GM12878 (cell line): ENCODE measurements at regions of chr1 and their contacts with region 1.

Region 1: GRCh38 chr1:157105988-157106812 is 6.6 kb upstream of the ETV3L start:
- DNase-seq: peak; percentile 41
- ATAC-seq: peak; percentile 97
- H3K4me3 ChIP-seq: no peak overlapping the region
- H3K27ac ChIP-seq: peak overlapping the region; percentile 55
- H3K4me1 ChIP-seq: peaks cover 18% of the 10 kb centered on the region
- H3K27me3 ChIP-seq: no peaks in the 10 kb centered on the region; a peak in 1 of 4 replicates
- CTCF ChIP-seq: no peak
- EP300 ChIP-seq: peak; percentile 22 to 91; a peak in 2 of 4 replicates
- POLR2A ChIP-seq: 0 out of 2 replicates have a peak, but pooled peaks have one; percentile 21
- RAD21 ChIP-seq: no peak

Region 2: DNA sequence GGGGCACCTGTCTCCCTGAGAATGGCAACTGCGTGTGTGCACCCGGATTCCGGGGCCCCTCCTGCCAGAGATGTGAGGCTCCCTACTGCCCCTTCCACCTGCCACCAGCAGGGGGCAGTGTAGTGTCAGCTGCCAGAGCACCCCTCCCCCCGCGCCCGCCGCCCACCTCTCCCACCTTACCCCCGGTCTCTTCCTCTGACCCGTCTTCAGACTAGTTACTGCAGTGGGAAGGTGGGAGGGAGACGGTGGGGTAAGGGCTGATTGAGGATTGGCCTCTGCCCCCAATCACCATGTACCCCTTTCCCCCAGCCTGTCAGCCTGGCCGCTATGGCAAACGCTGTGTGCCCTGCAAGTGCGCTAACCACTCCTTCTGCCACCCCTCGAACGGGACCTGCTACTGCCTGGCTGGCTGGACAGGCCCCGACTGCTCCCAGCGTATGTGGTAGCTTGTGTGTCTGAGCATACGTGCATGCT is 195.9 kb before region 1 on chr1:
- CTCF ChIA-PET with region 1: no interaction called
- POLR2A ChIA-PET with region 1: no interaction called
- RAD21 ChIA-PET with region 1: no interaction called
- SMC1A ChIA-PET with region 1: no interaction called
- in situ Hi-C with region 1: no loop called
- intact Hi-C with region 1: no loop called
- DNase-seq: no peak
- ATAC-seq: peak; percentile 77
- H3K4me3 ChIP-seq: no peak overlapping the region
- H3K27ac ChIP-seq: no peak overlapping the region
- H3K4me1 ChIP-seq: no peaks in the 10 kb centered on the region
- H3K27me3 ChIP-seq: peaks cover 2% of the 10 kb centered on the region in 2 experiments; a peak in 3 of 4 replicates
- CTCF ChIP-seq: peak; percentile 69 to 97 (median 70)
- EP300 ChIP-seq: no peak
- POLR2A ChIP-seq: no peak
- RAD21 ChIP-seq: peak; percentile 43

Region 3: DNA sequence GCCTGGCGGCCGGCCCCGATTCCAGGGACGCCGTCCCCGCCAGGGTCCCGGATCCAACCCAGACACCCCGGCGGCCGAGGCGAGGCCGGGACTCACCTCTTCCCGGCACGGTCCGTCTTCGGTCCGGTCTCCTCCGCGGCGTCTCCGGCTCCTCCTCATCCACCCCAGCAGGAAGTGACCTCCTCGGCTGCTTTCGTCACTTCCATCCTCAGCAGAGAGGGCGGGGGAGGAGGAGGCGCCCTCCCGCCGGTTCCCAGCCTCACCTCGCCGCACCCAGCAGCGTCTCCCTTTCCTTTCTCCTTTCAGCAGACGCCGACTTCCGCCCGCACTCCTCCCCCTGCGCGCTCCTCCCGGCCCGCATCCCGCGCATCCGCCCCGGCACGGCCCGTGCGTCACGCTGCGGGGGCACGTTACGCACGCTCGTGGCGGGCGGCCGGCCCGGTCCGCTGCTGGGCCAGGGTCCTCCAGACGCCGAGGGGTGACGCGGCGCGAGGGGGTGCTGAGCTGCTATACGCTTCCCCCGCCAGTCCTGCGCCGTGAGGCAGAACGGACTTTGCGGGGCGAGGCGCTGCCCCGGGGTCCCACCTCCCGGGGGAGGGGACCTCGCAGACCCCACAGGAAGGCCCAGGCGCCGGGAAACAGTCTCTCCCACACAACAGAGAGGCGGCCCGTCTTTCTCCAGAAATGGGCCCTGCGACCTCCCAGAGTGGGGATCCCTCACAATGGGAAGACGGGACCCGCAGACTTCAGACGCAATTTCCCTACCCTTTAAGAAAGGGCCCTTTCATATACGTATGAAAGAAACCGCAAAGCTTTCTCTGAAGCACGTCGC is 32.2 kb after region 1 on chr1 and contains the start of gene ETV3:
- CTCF ChIA-PET with region 1: interaction called, 7 read pairs
- POLR2A ChIA-PET with region 1: interaction called, 12 read pairs
- RAD21 ChIA-PET with region 1: interaction called, 9 read pairs
- SMC1A ChIA-PET with region 1: interaction called, 17 read pairs
- in situ Hi-C with region 1: no loop called
- intact Hi-C with region 1: no loop called
- DNase-seq: peak; percentile 42
- ATAC-seq: peak; percentile 90
- H3K4me3 ChIP-seq: peak within 1 kb of the TSS; percentile 96
- H3K27ac ChIP-seq: peak within 1 kb of the TSS; percentile 66
- H3K4me1 ChIP-seq: peaks cover 13% of the 10 kb centered on the region; the same call in 1 of the 2 replicates
- H3K27me3 ChIP-seq: no peaks in the 10 kb centered on the region
- CTCF ChIP-seq: no peak
- EP300 ChIP-seq: no peak
- POLR2A ChIP-seq: peak; percentile 93
- RAD21 ChIP-seq: no peak
- polyA plus RNA-seq, gene ETV3: 1.7 to 2.9 TPM